ENCODE measurements at regions of chr3 and their contacts with region 1.

Region 1: DNA sequence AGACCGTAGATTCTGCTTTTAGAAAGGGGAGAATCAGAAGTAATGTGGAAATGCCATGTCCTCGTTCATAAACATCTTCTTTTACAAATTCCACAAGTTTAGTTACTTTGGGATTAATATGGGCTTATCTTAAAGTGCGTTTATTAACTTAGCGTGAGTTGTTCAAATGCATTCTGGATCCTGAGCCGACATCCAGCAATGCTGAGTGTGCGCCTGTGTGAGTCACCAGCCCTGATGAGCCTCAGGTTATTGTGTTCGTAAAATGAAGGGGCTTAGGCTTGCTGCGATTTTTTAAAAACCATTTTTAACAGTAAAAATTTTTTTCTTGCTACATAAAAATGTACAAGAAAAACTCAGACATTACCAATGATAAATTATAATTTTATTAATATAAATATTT is 57.9 kb downstream of the TFRC start:
- DNase-seq: no peak
- ATAC-seq: no peak
- H3K4me3 ChIP-seq: no peak overlapping the region
- H3K4me3 Mint-ChIP-seq: no peak overlapping the region
- H3K27ac ChIP-seq: no peak overlapping the region
- H3K27ac Mint-ChIP-seq: no peak overlapping the region
- H3K4me1 ChIP-seq: no peaks in the 10 kb centered on the region
- H3K4me1 Mint-ChIP-seq: no peaks in the 10 kb centered on the region
- H3K27me3 ChIP-seq: peaks cover 0 to 3% of the 10 kb centered on the region in 2 experiments
- H3K27me3 Mint-ChIP-seq: peaks cover 18% of the 10 kb centered on the region
- CTCF ChIP-seq: no peak

Region 2: GRCh38 chr3:196053487-196053886 is 29.5 kb after region 1 on chr3:
- CTCF ChIA-PET with region 1: no interaction called
- POLR2A ChIA-PET with region 1: no interaction called
- intact Hi-C with region 1: loop called in 1 of 2 experiments (anchors 1 kb)
- DNase-seq: no peak
- ATAC-seq: no peak
- H3K4me3 ChIP-seq: no peak overlapping the region
- H3K4me3 Mint-ChIP-seq: no peak overlapping the region
- H3K27ac ChIP-seq: no peak overlapping the region
- H3K27ac Mint-ChIP-seq: no peak overlapping the region
- H3K4me1 ChIP-seq: no peaks in the 10 kb centered on the region
- H3K4me1 Mint-ChIP-seq: no peaks in the 10 kb centered on the region
- H3K27me3 ChIP-seq: no peaks in the 10 kb centered on the region
- H3K27me3 Mint-ChIP-seq: no peaks in the 10 kb centered on the region
- CTCF ChIP-seq: no peak